T-cell (primary cell): ENCODE measurements at regions of chr22 and their contacts with region 1.

Region 1: DNA sequence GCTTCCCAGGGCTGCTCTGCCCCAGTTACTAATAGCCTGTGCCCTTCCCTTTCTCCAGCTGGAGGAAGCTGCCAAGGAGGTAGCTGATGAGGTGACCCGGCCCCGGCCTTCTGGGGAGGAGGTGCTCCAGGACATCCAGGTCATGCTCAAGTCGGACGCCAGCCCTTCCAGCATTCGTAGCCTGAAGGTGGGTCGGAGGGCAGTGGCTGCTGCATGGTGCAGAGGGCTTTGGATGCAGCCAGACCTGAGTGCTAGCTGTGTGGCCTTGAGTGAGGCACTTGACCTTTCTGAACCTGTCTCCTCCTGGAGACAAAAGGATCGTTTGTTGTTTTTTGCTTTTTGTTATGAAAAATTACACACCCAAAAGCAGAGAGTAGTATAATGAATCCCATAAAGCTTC is 3.4 kb downstream of the MCM5 start:
- DNase-seq: no peak
- ATAC-seq: no peak
- H3K4me3 ChIP-seq: no peak overlapping the region
- H3K4me3 Mint-ChIP-seq: no peak overlapping the region
- H3K27ac ChIP-seq: no peak overlapping the region
- H3K27ac Mint-ChIP-seq: no peak overlapping the region
- H3K4me1 ChIP-seq: peaks cover 0 to 36% of the 10 kb centered on the region in 2 experiments
- H3K4me1 Mint-ChIP-seq: peaks cover 24 to 32% (median 24%) of the 10 kb centered on the region in 3 donors
- H3K27me3 ChIP-seq: no peaks in the 10 kb centered on the region
- H3K27me3 Mint-ChIP-seq: no peaks in the 10 kb centered on the region

Region 2: DNA sequence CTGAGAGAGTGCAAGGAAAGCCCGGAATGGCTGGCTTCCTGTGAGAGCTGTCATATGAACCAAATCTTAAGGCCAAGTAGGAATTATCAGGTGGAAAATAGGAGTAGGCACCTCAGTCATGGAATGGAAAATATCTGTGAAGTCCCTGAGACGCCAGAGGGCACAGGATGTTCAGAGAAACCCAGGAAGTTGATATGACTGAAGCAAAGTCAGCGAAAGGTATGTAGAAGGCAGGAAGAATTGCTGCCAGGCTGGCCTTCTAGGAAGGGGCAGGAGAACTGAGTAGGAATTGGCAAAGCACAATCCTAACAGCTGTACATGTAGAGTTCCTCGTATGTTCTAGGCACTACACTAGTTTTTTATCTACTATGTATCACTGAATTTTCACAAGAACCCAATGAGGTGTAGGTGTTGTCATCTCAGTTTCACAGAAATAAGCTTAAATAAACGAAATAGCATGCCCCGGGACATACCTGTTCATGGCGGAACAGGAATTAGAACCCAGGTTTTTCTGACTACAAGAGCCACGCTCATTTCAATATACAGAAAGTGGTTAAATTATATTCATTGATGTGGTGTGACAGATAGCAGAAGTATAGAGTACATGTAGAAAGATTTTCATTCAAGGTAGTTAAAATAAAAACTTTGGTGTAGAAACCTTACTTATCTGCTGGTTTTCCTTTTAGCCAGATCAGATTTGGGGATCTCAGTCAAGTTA is 129.0 kb before region 1 on chr22:
- CTCF ChIA-PET with region 1: no interaction called
- POLR2A ChIA-PET with region 1: no interaction called
- DNase-seq: peak in 1 of 35 experiments; percentile 16
- ATAC-seq: peak in 2 of 4 experiments; percentile 36 to 49
- H3K4me3 ChIP-seq: no peak overlapping the region
- H3K4me3 Mint-ChIP-seq: no peak overlapping the region
- H3K27ac ChIP-seq: no peak overlapping the region
- H3K27ac Mint-ChIP-seq: peak overlapping the region; percentile 5 to 68
- H3K4me1 ChIP-seq: peaks cover 6 to 11% of the 10 kb centered on the region in 2 experiments
- H3K4me1 Mint-ChIP-seq: peaks cover 24 to 26% (median 25%) of the 10 kb centered on the region in 3 donors
- H3K27me3 ChIP-seq: no peaks in the 10 kb centered on the region
- H3K27me3 Mint-ChIP-seq: no peaks in the 10 kb centered on the region

Region 3: GRCh38 chr22:35384527-35384926 is 18.8 kb before region 1 on chr22:
- CTCF ChIA-PET with region 1: no interaction called
- POLR2A ChIA-PET with region 1: no interaction called
- DNase-seq: no peak
- ATAC-seq: no peak
- H3K4me3 ChIP-seq: no peak overlapping the region
- H3K4me3 Mint-ChIP-seq: no peak overlapping the region
- H3K27ac ChIP-seq: no peak overlapping the region
- H3K27ac Mint-ChIP-seq: no peak overlapping the region
- H3K4me1 ChIP-seq: peaks cover 0 to 14% of the 10 kb centered on the region in 2 experiments
- H3K4me1 Mint-ChIP-seq: peaks cover 0 to 15% (median 12%) of the 10 kb centered on the region in 3 donors
- H3K27me3 ChIP-seq: peaks cover 0 to 58% of the 10 kb centered on the region in 2 experiments
- H3K27me3 Mint-ChIP-seq: peaks cover 23 to 50% of the 10 kb centered on the region in 2 donors

Region 4: DNA sequence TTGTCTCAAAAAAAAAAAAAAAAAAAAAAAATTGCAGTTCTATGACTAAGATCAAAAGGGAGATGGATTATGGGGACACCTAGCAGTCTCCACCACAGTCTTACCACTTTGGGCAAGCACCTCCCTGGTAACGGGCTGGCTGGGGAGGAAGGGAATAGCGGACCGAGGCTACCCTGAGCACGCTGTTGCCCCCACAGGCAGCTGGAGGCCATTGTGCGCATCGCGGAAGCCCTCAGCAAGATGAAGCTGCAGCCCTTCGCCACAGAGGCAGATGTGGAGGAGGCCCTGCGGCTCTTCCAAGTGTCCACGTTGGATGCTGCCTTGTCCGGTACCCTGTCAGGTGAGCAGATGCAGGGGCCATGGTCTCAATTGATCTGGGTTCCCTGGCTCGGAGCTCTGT is 17.8 kb after region 1 on chr22:
- CTCF ChIA-PET with region 1: no interaction called
- POLR2A ChIA-PET with region 1: interaction called in 1 of 2 experiments, 11 read pairs
- DNase-seq: no peak
- ATAC-seq: no peak
- H3K4me3 ChIP-seq: no peak overlapping the region
- H3K4me3 Mint-ChIP-seq: no peak overlapping the region
- H3K27ac ChIP-seq: no peak overlapping the region
- H3K27ac Mint-ChIP-seq: no peak overlapping the region
- H3K4me1 ChIP-seq: no peaks in the 10 kb centered on the region
- H3K4me1 Mint-ChIP-seq: peaks cover 0 to 2% (median 0%) of the 10 kb centered on the region in 3 donors
- H3K27me3 ChIP-seq: no peaks in the 10 kb centered on the region
- H3K27me3 Mint-ChIP-seq: no peaks in the 10 kb centered on the region